Activated B cell treated with CpG ODN at 0.5 μM for 24 hours (primary cell): ENCODE measurements at regions of chr1 and their contacts with region 1.

Region 1: GRCh38 chr1:52056163-52056936 is at the start of gene BTF3L4:
- DNase-seq: peak; percentile 87
- ATAC-seq: peak; percentile 88
- H3K4me3 Mint-ChIP-seq: peak within 1 kb of the TSS; percentile 100
- H3K27ac Mint-ChIP-seq: peak within 1 kb of the TSS; percentile 98
- H3K4me1 Mint-ChIP-seq: peaks cover 48% of the 10 kb centered on the region
- H3K27me3 Mint-ChIP-seq: no peaks in the 10 kb centered on the region
- CTCF ChIP-seq: no peak
- total RNA-seq, gene BTF3L4: 32.8 and 36.2 TPM in 2 replicates

Region 2: DNA sequence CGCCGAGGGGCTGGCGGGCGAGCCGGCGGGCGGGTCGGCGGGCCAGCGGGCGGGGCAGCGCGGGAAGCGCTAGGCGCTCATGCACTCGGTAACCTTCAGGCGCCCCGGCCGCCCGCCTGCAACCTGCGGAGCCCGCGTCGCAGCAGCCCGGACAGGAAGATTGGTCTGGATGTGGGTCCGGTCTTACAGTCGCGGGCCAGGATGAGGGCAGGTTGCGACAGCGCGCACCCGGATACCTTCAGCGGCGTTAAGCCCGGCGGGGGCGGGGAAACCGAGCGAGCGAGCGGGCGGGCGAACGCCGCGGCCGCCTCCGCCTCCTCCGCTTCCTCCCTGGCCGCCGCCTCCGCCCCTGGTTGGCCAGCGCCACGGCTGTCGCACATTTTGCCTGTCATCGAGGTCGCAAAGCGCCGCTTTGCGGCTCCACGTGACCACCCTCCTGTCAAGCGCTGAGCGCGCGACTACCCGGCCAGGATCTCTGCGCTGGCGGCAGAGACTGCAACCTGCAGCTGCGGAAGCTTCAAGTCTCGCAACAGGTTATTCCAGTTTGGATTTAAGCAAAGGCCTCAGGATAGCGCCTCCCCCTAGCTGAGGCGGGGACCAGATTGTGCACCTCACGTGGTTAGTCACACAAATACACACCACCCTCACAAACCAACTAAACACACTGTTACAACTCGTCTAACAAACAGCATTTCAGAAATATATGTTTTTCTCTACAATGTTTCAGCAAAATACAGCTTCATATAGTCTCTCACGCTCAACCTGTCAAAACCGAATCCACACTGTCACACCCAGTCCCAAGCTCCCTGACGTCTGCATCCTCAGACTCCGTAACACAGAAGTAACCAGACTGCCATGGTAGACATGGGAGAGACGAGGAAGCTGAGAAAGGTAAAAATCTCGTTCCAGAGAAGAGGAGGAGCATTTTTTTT is 1096.2 kb before region 1 on chr1 and contains the start of gene FAF1:
- CTCF ChIA-PET with region 1: no interaction called
- POLR2A ChIA-PET with region 1: no interaction called
- intact Hi-C with region 1: loop called (anchors 10 kb)
- DNase-seq: peak; percentile 98
- ATAC-seq: peak; percentile 90
- H3K4me3 Mint-ChIP-seq: peak within 1 kb of the TSS; percentile 93
- H3K27ac Mint-ChIP-seq: peak within 1 kb of the TSS; percentile 95
- H3K4me1 Mint-ChIP-seq: peaks cover 23% of the 10 kb centered on the region
- H3K27me3 Mint-ChIP-seq: no peaks in the 10 kb centered on the region
- CTCF ChIP-seq: no peak
- total RNA-seq, gene FAF1: 57.2 and 61.7 TPM in 2 replicates

Region 3: DNA sequence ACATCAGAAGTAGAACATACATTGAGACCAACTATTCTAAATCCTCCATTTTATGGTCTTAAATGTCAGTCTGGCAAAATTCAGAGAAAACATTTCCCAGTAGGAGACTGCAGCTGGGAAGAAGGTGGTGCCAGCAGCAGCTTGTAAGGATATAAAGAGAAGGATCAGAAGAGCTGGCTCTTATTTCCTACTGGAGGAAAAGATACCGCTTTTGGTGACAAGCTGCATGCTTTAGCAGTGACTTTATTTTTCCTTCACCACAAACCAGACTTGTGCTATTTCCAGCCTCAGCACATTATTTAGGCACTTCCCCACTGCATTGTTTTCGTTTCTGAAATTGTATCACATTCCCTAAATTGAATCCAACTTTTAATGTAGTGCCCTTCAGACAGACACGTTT is 791.9 kb before region 1 on chr1:
- CTCF ChIA-PET with region 1: no interaction called
- POLR2A ChIA-PET with region 1: no interaction called
- intact Hi-C with region 1: no loop called
- DNase-seq: no peak
- ATAC-seq: no peak
- H3K4me3 Mint-ChIP-seq: no peak overlapping the region
- H3K27ac Mint-ChIP-seq: no peak overlapping the region
- H3K4me1 Mint-ChIP-seq: peaks cover 52% of the 10 kb centered on the region
- H3K27me3 Mint-ChIP-seq: no peaks in the 10 kb centered on the region
- CTCF ChIP-seq: no peak

Region 4: GRCh38 chr1:51708911-51709760 is 347.2 kb before region 1 on chr1:
- CTCF ChIA-PET with region 1: no interaction called
- POLR2A ChIA-PET with region 1: no interaction called
- intact Hi-C with region 1: no loop called
- DNase-seq: no peak
- ATAC-seq: no peak
- H3K4me3 Mint-ChIP-seq: no peak overlapping the region
- H3K27ac Mint-ChIP-seq: no peak overlapping the region
- H3K4me1 Mint-ChIP-seq: no peaks in the 10 kb centered on the region
- H3K27me3 Mint-ChIP-seq: no peaks in the 10 kb centered on the region
- CTCF ChIP-seq: no peak

Region 5: GRCh38 chr1:51924455-51924854 is 131.9 kb before region 1 on chr1:
- CTCF ChIA-PET with region 1: no interaction called
- POLR2A ChIA-PET with region 1: no interaction called
- intact Hi-C with region 1: no loop called
- DNase-seq: no peak
- ATAC-seq: no peak
- H3K4me3 Mint-ChIP-seq: no peak overlapping the region
- H3K27ac Mint-ChIP-seq: no peak overlapping the region
- H3K4me1 Mint-ChIP-seq: no peaks in the 10 kb centered on the region
- H3K27me3 Mint-ChIP-seq: peaks cover 15% of the 10 kb centered on the region
- CTCF ChIP-seq: no peak

Region 6: DNA sequence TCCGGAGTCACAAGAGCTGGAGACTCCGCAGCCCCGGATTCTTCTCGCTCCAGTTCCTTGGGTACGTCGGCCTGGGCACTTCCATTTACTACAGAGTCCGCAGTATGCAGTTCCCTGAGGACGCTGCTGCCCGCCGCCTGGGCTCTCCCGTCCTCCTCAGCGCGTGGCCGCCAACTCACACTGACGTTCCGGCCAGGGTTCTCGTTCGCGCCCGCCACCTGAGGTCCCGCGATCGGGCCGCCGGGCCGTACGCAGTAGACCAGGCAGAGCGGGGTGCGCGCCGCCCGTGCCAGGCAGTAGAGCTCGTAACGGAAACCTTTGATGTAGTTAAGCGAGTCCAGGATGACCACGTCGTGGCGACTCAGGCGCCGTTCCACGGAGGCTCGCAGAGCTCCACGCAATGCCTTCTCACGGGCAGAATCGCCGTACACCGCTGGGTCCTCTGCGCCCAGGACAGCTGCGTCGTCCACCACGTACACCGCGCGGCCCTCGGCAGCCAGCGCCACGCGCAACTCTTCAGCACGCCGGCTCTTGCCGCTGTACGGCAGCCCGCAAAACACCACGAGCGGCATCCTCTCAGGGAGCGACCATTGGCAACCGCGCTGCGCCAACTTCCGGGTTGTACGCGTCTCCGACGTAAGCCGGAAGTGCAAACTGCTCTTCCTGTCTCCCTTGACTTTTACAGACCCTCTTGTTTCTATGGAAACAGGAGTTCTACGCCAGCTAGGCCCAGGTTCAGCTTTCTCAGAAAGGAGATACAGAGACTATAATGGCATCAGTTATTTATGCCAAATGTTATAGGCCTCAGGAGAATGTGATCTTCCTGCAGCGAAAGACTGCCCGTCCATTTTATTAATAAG is 22.9 kb before region 1 on chr1 and contains the start of gene KTI12:
- CTCF ChIA-PET with region 1: interaction called, 4 read pairs
- POLR2A ChIA-PET with region 1: interaction called, 63 read pairs
- intact Hi-C with region 1: loop called (anchors 1 kb)
- DNase-seq: peak; percentile 76
- ATAC-seq: peak; percentile 89
- H3K4me3 Mint-ChIP-seq: peak within 1 kb of the TSS; percentile 93
- H3K27ac Mint-ChIP-seq: peak within 1 kb of the TSS; percentile 89
- H3K4me1 Mint-ChIP-seq: peaks cover 34% of the 10 kb centered on the region
- H3K27me3 Mint-ChIP-seq: no peaks in the 10 kb centered on the region
- CTCF ChIP-seq: no peak
- total RNA-seq, gene KTI12: 18.4 and 18.8 TPM in 2 replicates

Region 7: DNA sequence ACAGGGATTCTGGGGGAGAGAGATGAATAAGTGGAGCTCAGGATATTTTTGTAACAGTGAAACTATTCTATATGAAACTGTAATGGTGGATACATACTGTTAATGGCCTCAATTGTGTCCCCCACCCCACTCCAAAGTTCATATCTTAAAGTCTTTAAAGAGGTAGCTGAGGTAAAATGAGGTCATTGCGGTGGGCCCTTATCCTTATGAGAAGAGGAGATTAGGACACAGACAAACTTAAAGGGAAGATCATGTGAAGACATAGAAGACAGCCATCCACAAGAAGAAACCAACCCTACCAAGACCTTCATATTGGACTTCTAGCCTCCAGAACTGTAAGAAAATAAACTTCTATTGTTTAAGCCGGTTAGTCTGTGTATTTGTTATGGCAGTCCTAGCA is 11.1 kb before region 1 on chr1:
- CTCF ChIA-PET with region 1: no interaction called
- POLR2A ChIA-PET with region 1: no interaction called
- intact Hi-C with region 1: no loop called
- DNase-seq: no peak
- ATAC-seq: no peak
- H3K4me3 Mint-ChIP-seq: no peak overlapping the region
- H3K27ac Mint-ChIP-seq: no peak overlapping the region
- H3K4me1 Mint-ChIP-seq: no peaks in the 10 kb centered on the region
- H3K27me3 Mint-ChIP-seq: no peaks in the 10 kb centered on the region
- CTCF ChIP-seq: no peak

Region 8: DNA sequence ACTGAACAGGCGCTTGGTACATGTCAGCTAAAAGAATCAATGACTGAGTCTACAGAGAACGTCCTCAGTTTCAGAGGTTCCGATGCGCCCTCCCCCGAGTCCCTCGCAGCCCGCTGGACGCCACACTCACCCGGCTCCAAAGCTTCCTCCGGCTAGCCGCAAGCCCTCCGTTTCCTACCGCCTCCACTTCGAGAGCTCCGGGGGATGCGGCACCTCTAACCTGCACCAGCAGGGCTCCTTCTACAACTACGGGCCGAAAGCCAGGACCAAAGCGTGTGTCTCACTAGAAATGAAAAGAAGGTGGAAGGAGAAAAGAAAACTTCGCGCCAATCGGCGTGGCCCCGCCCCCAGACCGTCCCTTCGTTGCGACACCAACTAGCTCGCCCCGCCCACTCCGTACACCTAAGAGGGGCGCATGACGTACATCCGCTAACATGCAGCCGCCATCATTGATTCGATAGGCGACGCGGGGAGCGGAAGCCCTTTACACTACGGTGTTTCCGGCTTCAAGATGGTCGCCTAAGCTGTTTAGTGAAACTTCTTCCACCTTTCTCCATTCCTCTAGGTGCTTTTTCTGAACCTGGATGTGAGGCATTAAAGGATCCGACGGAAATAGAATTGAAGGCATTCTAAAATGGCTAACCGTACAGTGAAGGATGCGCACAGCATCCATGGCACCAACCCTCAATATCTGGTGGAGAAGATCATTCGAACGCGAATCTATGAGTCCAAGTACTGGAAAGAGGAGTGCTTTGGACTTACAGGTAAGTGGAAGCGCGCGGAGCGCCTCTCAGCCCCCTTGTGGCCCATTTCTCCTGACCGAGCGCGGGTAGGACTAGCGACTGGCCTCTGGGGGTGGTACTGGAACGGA is 348.0 kb after region 1 on chr1 and contains the starts of genes ORC1 and PRPF38A:
- CTCF ChIA-PET with region 1: no interaction called
- POLR2A ChIA-PET with region 1: interaction called, 3 read pairs
- intact Hi-C with region 1: loop called (anchors 1 kb)
- DNase-seq: peak; percentile 88
- ATAC-seq: peak; percentile 95
- H3K4me3 Mint-ChIP-seq: peak within 1 kb of the TSS; percentile 99
- H3K27ac Mint-ChIP-seq: peak within 1 kb of the TSS; percentile 95
- H3K4me1 Mint-ChIP-seq: peaks cover 32% of the 10 kb centered on the region
- H3K27me3 Mint-ChIP-seq: no peaks in the 10 kb centered on the region
- CTCF ChIP-seq: no peak
- total RNA-seq, gene ORC1: 3.2 TPM in 2 replicates
- total RNA-seq, gene PRPF38A: 75.6 and 78.4 TPM in 2 replicates

Region 9: DNA sequence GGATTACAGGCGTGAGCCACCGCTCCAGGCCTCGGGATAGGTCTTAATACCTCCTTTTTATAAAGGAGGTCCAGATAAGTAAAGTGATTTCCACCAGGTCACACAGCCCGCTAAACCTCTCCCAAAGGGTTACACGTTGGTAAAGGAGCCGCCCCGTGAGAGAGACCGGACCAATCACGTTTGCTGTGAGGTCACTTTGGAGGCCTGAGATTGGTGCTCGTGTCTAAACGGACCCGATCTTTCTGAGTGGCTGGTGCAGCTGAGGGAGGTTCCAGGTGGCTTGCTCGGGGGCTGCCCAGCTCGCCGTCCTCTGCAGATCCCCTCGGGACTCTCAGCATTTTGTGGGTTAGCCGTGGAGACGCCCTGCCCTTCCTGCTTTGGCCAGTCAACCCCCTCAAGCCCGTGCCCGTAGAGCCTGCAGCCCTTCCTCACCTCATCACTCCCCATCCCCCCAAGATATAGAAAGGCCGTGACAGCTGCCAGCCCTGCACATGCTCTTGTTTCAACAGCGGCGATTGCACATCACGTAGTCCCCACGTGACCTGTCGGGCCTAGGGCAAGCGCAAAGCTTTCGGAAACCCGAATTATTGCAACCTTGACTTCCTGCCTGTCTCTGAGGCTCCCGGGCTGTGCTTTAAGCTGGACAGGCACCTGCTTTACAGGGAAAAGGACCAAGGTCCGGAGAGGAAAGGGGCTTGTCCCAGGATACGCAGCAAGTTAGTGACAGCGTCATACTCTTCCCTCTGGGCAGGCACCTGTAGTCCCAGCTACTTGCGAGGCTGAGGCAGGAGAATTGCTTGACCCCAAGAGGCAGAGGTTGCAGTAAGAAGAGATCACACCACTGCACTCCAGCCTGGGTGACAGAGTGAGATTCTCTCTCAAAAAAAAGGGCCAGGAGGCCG is 646.8 kb after region 1 on chr1:
- CTCF ChIA-PET with region 1: no interaction called
- POLR2A ChIA-PET with region 1: no interaction called
- intact Hi-C with region 1: loop called (anchors 5 kb)
- DNase-seq: peak; percentile 74
- ATAC-seq: peak; percentile 87
- H3K4me3 Mint-ChIP-seq: peak overlapping the region; percentile 87
- H3K27ac Mint-ChIP-seq: peak overlapping the region; percentile 98
- H3K4me1 Mint-ChIP-seq: peaks cover 26% of the 10 kb centered on the region
- H3K27me3 Mint-ChIP-seq: peaks cover 2% of the 10 kb centered on the region
- CTCF ChIP-seq: no peak

Region 10: DNA sequence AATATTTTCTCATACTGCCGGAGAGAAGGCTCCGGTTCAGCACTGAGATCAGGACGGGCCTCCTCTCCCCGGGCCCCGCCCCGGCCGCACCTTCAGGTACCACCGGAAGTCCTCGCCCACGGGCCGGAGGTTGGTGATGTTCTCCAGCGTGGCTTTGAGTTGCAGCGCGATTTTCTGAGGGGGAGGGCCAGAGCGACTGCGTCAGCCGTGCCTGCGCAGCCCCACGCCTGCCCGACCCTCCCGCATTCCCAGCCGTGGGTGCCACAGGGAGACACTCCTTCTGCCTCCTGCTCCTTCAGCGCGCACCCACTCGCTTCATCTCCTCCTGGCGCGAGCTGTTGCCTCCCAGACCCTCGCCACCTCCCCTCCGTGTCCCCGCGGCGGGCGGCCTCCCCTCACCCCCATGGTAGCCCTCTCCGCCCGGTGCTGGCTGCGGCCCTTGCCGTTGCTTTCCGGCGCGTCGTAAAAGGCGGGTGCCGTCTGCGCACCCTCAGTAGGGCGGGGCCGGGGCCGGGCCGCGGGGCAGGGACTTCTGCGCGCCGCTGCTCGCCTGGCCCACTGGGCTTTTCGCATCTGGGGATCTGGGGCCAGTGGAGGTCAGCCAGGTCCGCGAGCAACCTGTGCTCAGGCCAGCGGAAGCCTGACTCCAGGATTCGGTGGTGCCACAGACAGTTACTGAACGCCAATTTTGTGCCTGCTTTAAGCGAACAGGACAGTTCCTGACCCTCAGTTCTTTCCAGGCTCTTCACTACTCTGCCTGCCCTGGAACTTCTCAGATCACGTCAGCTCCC is 1164.0 kb after region 1 on chr1 and contains the start of gene CZIB:
- CTCF ChIA-PET with region 1: no interaction called
- POLR2A ChIA-PET with region 1: no interaction called
- intact Hi-C with region 1: loop called (anchors 10 kb)
- DNase-seq: peak; percentile 98
- ATAC-seq: peak; percentile 92
- H3K4me3 Mint-ChIP-seq: peak within 1 kb of the TSS; percentile 94
- H3K27ac Mint-ChIP-seq: peak within 1 kb of the TSS; percentile 97
- H3K4me1 Mint-ChIP-seq: peaks cover 20% of the 10 kb centered on the region
- H3K27me3 Mint-ChIP-seq: no peaks in the 10 kb centered on the region
- CTCF ChIP-seq: no peak
- total RNA-seq, gene CZIB: 48.9 and 51.8 TPM in 2 replicates